ENCODE measurements at regions of chr3 and their contacts with region 1.

Region 1: DNA sequence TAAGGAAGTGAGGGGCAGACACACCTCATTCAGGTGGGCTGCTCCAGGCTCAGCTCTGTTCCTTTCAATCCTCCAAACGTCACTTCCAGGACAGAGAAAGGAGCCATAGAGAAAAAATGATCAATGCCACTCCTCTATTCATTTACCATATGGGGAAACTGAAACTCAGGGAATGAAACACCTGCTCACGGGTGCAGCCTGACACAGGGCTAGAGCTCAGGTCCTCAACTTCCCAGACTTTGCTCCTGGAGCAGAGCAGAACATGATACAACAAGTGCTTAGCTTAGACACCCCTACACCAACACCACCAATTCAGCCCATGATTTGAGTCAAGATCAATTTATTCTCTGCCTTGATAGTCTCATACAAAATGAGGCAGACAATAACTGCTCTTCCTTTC is 58.5 kb upstream of the LPP start:
- DNase-seq: no peak
- H3K4me3 Mint-ChIP-seq: no peak overlapping the region
- H3K27ac Mint-ChIP-seq: no peak overlapping the region
- H3K4me1 Mint-ChIP-seq: no peaks in the 10 kb centered on the region
- H3K27me3 Mint-ChIP-seq: no peaks in the 10 kb centered on the region

Region 2: GRCh38 chr3:188071636-188072035 is 23.8 kb before region 1 on chr3:
- CTCF ChIA-PET with region 1: no interaction called
- POLR2A ChIA-PET with region 1: no interaction called
- DNase-seq: no peak
- H3K4me3 Mint-ChIP-seq: no peak overlapping the region
- H3K27ac Mint-ChIP-seq: no peak overlapping the region
- H3K4me1 Mint-ChIP-seq: no peaks in the 10 kb centered on the region
- H3K27me3 Mint-ChIP-seq: no peaks in the 10 kb centered on the region

Region 3: DNA sequence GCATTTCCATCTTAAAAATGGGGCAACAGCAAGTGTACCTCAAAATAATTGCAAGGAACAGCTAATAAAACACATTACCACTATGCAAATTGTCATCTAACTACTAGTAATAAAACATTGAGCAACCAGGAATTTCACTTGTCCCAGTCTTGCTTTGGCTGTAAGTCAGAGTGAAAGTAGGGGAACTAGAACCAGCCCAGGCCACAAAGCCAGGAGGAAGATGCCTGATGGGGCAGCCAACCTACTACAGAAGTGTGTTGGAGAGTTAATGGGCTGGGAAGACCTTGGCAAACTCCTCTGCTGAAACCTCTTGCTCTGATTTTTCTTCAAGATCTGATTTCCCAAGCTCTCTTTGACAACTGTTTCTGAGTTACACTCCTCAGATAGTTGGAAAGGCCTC is 18.3 kb after region 1 on chr3:
- CTCF ChIA-PET with region 1: interaction called, 13 read pairs
- POLR2A ChIA-PET with region 1: no interaction called
- DNase-seq: no peak
- H3K4me3 Mint-ChIP-seq: no peak overlapping the region
- H3K27ac Mint-ChIP-seq: no peak overlapping the region
- H3K4me1 Mint-ChIP-seq: peaks cover 4% of the 10 kb centered on the region
- H3K27me3 Mint-ChIP-seq: peaks cover 2% of the 10 kb centered on the region

Region 4: GRCh38 chr3:188124184-188124583 is 28.8 kb after region 1 on chr3:
- CTCF ChIA-PET with region 1: no interaction called
- POLR2A ChIA-PET with region 1: no interaction called
- DNase-seq: no peak
- H3K4me3 Mint-ChIP-seq: no peak overlapping the region
- H3K27ac Mint-ChIP-seq: no peak overlapping the region
- H3K4me1 Mint-ChIP-seq: peaks cover 5% of the 10 kb centered on the region
- H3K27me3 Mint-ChIP-seq: no peaks in the 10 kb centered on the region

Measured in activated CD4-positive, alpha-beta T cell treated with anti-CD3 and anti-CD28 coated beads, Interleukin-2, amount 10 ng/mL, durations not matched to agents 7 days and 5 days (primary cell).